Vagina (tissue), 2 donors: ENCODE measurements at regions of chr20 and their contacts with region 1.

Region 1: GRCh38 chr20:36144336-36144735 is 10.2 kb upstream of the EPB41L1 start:
- DNase-seq: no peak
- H3K4me3 ChIP-seq: no peak overlapping the region
- H3K27ac ChIP-seq: no peak overlapping the region
- H3K4me1 ChIP-seq: peaks cover 3% of the 10 kb centered on the region
- H3K27me3 ChIP-seq: no peaks in the 10 kb centered on the region
- CTCF ChIP-seq: no peak
- POLR2A ChIP-seq: no peak

Region 2: GRCh38 chr20:35739294-35740163 is 404.8 kb before region 1 on chr20:
- intact Hi-C with region 1: no loop called
- DNase-seq: no peak
- H3K4me3 ChIP-seq: peak overlapping the region; percentile 79 to 82
- H3K27ac ChIP-seq: peak overlapping the region; percentile 98
- H3K4me1 ChIP-seq: peaks cover 74% of the 10 kb centered on the region
- H3K27me3 ChIP-seq: no peaks in the 10 kb centered on the region
- CTCF ChIP-seq: no peak
- POLR2A ChIP-seq: no peak

Region 3: DNA sequence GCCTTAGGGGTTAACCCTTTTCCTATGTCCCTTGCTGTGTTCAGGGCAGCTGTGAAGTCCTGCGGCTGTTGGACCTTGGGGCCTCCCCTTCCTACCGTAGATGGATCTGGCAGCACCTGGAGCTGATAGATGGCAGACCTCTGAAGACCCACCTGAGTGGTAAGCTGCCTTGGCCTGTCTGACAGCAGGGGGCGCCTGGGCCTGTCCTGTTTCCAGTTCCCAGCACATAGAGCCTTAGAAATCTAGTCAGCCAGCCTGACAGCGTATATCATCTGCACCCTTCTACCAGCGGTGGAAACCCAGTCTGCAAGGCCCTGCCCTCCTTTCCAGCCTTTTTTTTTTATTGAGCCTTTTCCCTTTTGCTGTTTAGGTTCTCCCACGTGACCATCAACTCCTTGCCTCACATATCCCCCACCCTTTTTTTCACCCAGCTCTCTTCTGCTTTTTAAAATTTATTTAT is 149.3 kb before region 1 on chr20:
- intact Hi-C with region 1: loop called (anchors 2 kb)
- DNase-seq: no peak
- H3K4me3 ChIP-seq: no peak overlapping the region
- H3K27ac ChIP-seq: no peak overlapping the region
- H3K4me1 ChIP-seq: no peaks in the 10 kb centered on the region
- H3K27me3 ChIP-seq: no peaks in the 10 kb centered on the region
- CTCF ChIP-seq: peak; percentile 58 to 93 (median 85)
- POLR2A ChIP-seq: no peak